Calu3 (cell line): ENCODE measurements at regions of chr5 and their contacts with region 1.

Region 1: GRCh38 chr5:121396716-121397115 is 455.0 kb upstream of the FTMT start:
- DNase-seq: no peak
- H3K4me3 Mint-ChIP-seq: no peak overlapping the region
- H3K27ac Mint-ChIP-seq: no peak overlapping the region
- H3K4me1 Mint-ChIP-seq: no peaks in the 10 kb centered on the region
- H3K27me3 Mint-ChIP-seq: no peaks in the 10 kb centered on the region
- CTCF ChIP-seq: no peak

Region 2: GRCh38 chr5:121109817-121110216 is 286.9 kb before region 1 on chr5:
- CTCF ChIA-PET with region 1: interaction called, 11 read pairs
- intact Hi-C with region 1: no loop called
- DNase-seq: no peak
- H3K4me3 Mint-ChIP-seq: no peak overlapping the region
- H3K27ac Mint-ChIP-seq: no peak overlapping the region
- H3K4me1 Mint-ChIP-seq: peaks cover 10% of the 10 kb centered on the region
- H3K27me3 Mint-ChIP-seq: no peaks in the 10 kb centered on the region
- CTCF ChIP-seq: no peak

Region 3: GRCh38 chr5:121503111-121503840 is 106.6 kb after region 1 on chr5:
- CTCF ChIA-PET with region 1: no interaction called
- intact Hi-C with region 1: no loop called
- DNase-seq: peak; percentile 76
- H3K4me3 Mint-ChIP-seq: no peak overlapping the region
- H3K27ac Mint-ChIP-seq: peak overlapping the region; percentile 45
- H3K4me1 Mint-ChIP-seq: peaks cover 9% of the 10 kb centered on the region
- H3K27me3 Mint-ChIP-seq: no peaks in the 10 kb centered on the region
- CTCF ChIP-seq: no peak

Region 4: GRCh38 chr5:121630402-121630801 is 233.7 kb after region 1 on chr5:
- CTCF ChIA-PET with region 1: no interaction called
- intact Hi-C with region 1: no loop called
- DNase-seq: no peak
- H3K4me3 Mint-ChIP-seq: no peak overlapping the region
- H3K27ac Mint-ChIP-seq: no peak overlapping the region
- H3K4me1 Mint-ChIP-seq: peaks cover 11% of the 10 kb centered on the region
- H3K27me3 Mint-ChIP-seq: no peaks in the 10 kb centered on the region
- CTCF ChIP-seq: no peak